ENCODE measurements at regions of chr1 and their contacts with region 1.

Region 1: DNA sequence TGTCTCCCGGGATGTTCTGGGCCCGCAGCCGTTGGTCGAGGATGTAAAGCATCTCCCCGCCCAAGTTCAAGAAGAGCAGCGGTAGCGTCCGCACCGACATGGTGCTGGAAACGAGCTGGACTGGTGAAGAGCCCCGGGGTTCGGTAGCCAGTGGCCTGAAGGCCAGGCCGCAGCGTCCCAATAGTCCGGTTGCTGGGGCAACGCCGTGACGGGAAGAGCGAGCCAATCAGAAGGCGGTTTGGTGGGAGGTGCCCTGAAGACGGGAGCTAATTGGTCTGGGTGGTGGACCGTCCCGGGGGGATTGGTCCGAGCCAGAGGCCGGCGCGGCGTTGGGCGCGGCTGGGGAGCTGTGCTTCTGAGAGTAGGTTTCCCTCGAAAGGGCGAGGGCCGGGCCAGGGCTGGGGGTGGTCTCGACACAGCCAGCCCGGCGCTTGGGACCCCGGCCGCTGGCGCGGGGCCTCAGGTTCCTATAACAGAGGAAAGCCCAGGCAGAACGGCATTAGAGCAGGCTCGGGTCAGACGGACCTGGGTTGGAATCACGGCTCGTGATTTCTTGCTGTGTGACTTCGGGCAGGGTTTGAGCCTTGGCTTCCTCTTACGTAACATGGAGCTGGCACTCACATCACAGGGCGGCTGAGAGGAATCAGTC is at the start of gene OSCP1:
- DNase-seq: peak; percentile 93
- ATAC-seq: peak; percentile 95
- H3K4me3 Mint-ChIP-seq: peak within 1 kb of the TSS; percentile 77
- H3K27ac Mint-ChIP-seq: peak within 1 kb of the TSS; percentile 58; the same call in 1 of the 2 replicates
- H3K4me1 Mint-ChIP-seq: peaks cover 18% of the 10 kb centered on the region
- H3K27me3 Mint-ChIP-seq: peaks cover 4% of the 10 kb centered on the region
- CTCF ChIP-seq: no peak
- total RNA-seq, gene OSCP1: 1.7 to 2.3 TPM (median 2.0 TPM) in 3 replicates

Region 2: DNA sequence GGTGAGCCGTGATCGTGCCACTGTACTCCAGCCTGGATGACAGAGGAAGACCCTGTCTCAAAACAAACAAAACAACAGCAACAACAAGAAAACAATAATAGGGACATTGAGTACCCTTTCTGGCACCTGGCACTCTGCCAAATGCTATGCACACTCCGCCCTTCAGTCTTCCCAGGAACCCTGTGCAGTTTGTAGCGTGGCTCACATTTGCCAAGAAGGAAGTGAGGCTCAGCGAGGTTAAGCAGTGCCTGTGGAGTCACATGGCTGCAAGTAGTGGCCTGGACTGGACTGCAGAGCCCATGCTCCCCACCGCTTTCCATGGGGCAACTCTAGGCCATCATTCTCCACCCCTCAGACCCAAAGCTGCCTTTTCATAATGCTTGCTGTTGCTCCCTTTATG is 121.7 kb before region 1 on chr1:
- CTCF ChIA-PET with region 1: no interaction called
- POLR2A ChIA-PET with region 1: no interaction called
- DNase-seq: no peak
- ATAC-seq: no peak
- H3K4me3 Mint-ChIP-seq: no peak overlapping the region
- H3K27ac Mint-ChIP-seq: no peak overlapping the region
- H3K4me1 Mint-ChIP-seq: peaks cover 17% of the 10 kb centered on the region
- H3K27me3 Mint-ChIP-seq: peaks cover 18% of the 10 kb centered on the region
- CTCF ChIP-seq: no peak

Region 3: GRCh38 chr1:36406440-36406839 is 44.0 kb before region 1 on chr1:
- CTCF ChIA-PET with region 1: no interaction called
- POLR2A ChIA-PET with region 1: no interaction called
- DNase-seq: no peak
- ATAC-seq: no peak
- H3K4me3 Mint-ChIP-seq: no peak overlapping the region
- H3K27ac Mint-ChIP-seq: peak overlapping the region; percentile 41; the same call in 1 of the 2 replicates
- H3K4me1 Mint-ChIP-seq: peaks cover 4% of the 10 kb centered on the region; the same call in 1 of the 2 replicates
- H3K27me3 Mint-ChIP-seq: no peaks in the 10 kb centered on the region
- CTCF ChIP-seq: no peak

Region 4: GRCh38 chr1:36425800-36426199 is 24.6 kb before region 1 on chr1:
- CTCF ChIA-PET with region 1: no interaction called
- POLR2A ChIA-PET with region 1: no interaction called
- DNase-seq: no peak
- ATAC-seq: no peak
- H3K4me3 Mint-ChIP-seq: no peak overlapping the region
- H3K27ac Mint-ChIP-seq: no peak overlapping the region
- H3K4me1 Mint-ChIP-seq: peaks cover 6% of the 10 kb centered on the region
- H3K27me3 Mint-ChIP-seq: peaks cover 5% of the 10 kb centered on the region; the same call in 1 of the 2 replicates
- CTCF ChIP-seq: no peak

Region 5: GRCh38 chr1:36463803-36464604 is 13.6 kb after region 1 on chr1 and contains the start of gene MRPS15:
- CTCF ChIA-PET with region 1: interaction called, 15 read pairs
- POLR2A ChIA-PET with region 1: interaction called, 16 read pairs
- DNase-seq: peak; percentile 93
- ATAC-seq: peak; percentile 86
- H3K4me3 Mint-ChIP-seq: peak within 1 kb of the TSS; percentile 94
- H3K27ac Mint-ChIP-seq: peak within 1 kb of the TSS; percentile 95
- H3K4me1 Mint-ChIP-seq: peaks cover 16% of the 10 kb centered on the region
- H3K27me3 Mint-ChIP-seq: peaks cover 45% of the 10 kb centered on the region
- CTCF ChIP-seq: no peak
- total RNA-seq, gene MRPS15: 100.0 to 113 TPM (median 104 TPM) in 3 replicates

Region 6: DNA sequence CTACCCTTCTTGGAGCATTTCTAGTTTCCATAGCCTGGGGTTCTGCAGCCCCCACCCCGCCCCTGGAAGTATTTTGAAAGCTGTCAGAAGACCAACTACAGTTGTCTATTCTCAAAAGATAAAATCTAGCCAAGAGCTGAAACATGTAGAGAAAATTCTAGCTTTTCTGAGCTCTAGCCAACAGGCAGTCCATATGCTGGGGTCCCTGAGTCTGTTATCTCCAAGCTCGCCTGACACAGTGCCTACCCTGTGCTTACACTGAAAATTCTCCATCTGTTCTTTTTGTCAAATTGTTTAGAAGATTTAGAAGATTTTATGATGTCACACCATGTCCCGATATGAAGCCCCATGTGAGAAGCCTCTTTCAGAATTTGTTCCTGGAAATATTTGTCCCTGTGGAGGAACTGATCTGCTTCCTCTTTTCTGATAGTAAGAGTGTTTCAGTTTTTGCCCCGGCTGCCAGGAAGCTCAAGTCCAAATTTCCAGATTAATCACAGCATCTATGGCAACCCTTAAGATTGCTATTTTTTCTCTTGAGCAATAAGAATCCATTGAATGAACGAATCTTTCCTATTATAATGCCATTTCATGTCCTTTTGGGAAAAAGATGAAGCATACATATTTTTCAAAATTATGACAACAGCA is 56.0 kb after region 1 on chr1:
- CTCF ChIA-PET with region 1: no interaction called
- POLR2A ChIA-PET with region 1: no interaction called
- DNase-seq: no peak
- ATAC-seq: no peak
- H3K4me3 Mint-ChIP-seq: no peak overlapping the region
- H3K27ac Mint-ChIP-seq: no peak overlapping the region
- H3K4me1 Mint-ChIP-seq: peaks cover 3% of the 10 kb centered on the region
- H3K27me3 Mint-ChIP-seq: no peaks in the 10 kb centered on the region; the same call in 1 of the 2 replicates
- CTCF ChIP-seq: no peak